AG04450 (cell line): ENCODE measurements at regions of chr1 and their contacts with region 1.

Region 1: GRCh38 chr1:200488375-200489165 is 78.7 kb upstream of the ZNF281 start:
- DNase-seq: peak; percentile 66
- H3K4me3 ChIP-seq: no peak overlapping the region
- H3K27ac ChIP-seq: peak overlapping the region; percentile 61
- H3K27me3 ChIP-seq: no peaks in the 10 kb centered on the region
- CTCF ChIP-seq: peak; percentile 88

Region 2: DNA sequence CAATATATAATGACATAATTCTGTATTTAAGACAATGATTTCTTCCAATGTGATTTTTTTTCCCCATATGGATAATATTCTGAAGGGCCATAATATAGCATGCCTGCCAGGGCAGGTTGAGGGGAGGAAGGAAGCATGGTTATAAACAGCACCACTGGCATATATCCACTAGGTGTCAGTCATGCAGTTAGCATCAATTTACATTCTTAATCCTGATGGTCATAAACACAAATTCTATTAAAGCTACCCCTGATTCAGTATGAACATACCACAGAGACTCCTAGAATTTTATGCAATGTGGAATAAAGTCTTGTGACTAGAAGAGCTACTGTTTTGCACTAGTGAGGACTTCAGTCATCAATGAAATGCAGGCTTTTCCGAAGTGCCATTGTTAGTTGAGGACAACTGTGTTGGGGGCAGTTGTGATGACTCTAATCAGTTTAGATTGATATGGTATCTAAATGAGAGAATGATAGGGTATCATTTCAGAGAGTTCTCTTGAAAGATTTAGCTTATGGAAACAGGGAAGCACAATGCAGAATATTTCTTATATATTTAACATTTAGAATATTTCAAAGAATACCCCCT is 803.8 kb before region 1 on chr1:
- CTCF ChIA-PET with region 1: interaction called, 13 read pairs
- POLR2A ChIA-PET with region 1: no interaction called
- DNase-seq: peak; percentile 30
- H3K4me3 ChIP-seq: no peak overlapping the region
- H3K27ac ChIP-seq: no peak overlapping the region
- H3K27me3 ChIP-seq: no peaks in the 10 kb centered on the region
- CTCF ChIP-seq: peak; percentile 83

Region 3: DNA sequence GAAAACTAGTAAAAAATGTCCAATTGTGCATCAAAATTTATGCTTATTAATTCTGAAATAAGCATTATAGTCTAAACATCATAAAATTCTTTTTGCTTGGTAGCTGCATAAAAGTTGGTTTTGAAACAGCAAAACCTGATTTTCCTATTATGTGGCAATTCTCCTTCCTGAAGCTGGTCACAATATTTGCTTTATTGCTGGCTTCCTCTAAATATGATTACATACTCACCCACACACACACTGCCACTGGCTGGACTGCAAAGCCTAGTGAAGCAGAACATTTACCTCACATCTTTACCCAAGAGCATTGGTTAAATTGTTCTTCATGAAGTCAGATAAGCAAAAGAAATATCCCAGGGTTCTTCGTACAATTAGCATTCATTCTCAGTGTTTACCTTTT is 358.0 kb before region 1 on chr1:
- CTCF ChIA-PET with region 1: interaction called, 11 read pairs
- POLR2A ChIA-PET with region 1: no interaction called
- DNase-seq: no peak
- H3K4me3 ChIP-seq: no peak overlapping the region
- H3K27ac ChIP-seq: no peak overlapping the region
- H3K27me3 ChIP-seq: no peaks in the 10 kb centered on the region
- CTCF ChIP-seq: no peak

Region 4: DNA sequence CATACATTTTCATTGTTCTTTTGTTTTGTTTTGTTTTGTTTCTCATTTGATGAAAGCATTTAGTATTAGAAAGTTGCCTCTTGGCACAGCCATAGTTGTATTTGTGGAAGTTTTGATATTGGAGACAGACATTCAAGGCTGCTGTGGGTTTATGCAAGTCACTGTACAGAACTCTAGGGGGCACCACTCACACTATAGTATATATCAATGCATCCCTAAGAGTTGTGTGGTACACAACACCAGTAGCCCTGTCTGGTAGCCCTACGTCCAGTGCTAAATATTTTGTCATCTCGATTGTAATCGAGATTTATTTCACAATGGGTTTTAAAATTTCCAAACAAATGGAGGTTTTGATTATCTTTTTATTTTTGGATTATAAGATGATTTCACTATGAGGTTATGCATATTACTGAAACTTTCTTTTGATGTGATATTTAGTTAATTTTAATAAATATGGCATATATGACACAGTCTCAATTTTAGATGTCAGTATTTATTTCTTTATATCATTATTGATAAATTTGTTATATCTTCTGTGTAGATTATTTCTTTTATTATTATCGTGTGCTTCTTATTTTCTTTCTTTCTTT is 348.8 kb before region 1 on chr1:
- CTCF ChIA-PET with region 1: interaction called, 13 read pairs
- POLR2A ChIA-PET with region 1: no interaction called
- DNase-seq: peak; percentile 29
- H3K4me3 ChIP-seq: no peak overlapping the region
- H3K27ac ChIP-seq: no peak overlapping the region
- H3K27me3 ChIP-seq: no peaks in the 10 kb centered on the region
- CTCF ChIP-seq: peak; percentile 77